AG04449 (cell line): ENCODE measurements at regions of chr4 and their contacts with region 1.

Region 1: GRCh38 chr4:141307241-141307689 is 86.6 kb downstream of the ZNF330 start:
- DNase-seq: peak; percentile 29
- H3K4me3 ChIP-seq: no peak overlapping the region
- CTCF ChIP-seq: peak; percentile 81

Region 2: GRCh38 chr4:140408974-140409373 is 898.3 kb before region 1 on chr4:
- CTCF ChIA-PET with region 1: no interaction called
- POLR2A ChIA-PET with region 1: no interaction called
- DNase-seq: no peak
- H3K4me3 ChIP-seq: no peak overlapping the region
- CTCF ChIP-seq: no peak

Region 3: DNA sequence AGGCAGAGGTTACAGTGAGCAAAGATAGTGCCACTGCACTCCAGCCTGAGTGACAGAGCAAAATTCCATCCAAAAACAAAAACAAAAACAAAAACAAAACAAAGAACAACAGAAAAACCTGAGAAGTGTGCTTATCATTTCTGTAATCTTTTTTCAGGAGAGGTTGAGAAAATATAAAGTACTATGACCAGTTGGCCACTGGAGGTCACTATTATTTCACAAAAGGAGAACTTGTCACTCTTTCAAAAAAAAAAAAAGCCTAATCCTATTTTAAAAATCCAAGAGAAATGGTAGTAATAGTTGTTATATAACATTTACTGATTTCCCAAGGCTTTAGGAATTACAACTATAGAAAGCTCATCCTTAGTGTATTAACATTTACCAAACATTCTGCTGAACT is 149.0 kb before region 1 on chr4:
- CTCF ChIA-PET with region 1: interaction called, 19 read pairs
- POLR2A ChIA-PET with region 1: no interaction called
- DNase-seq: no peak
- H3K4me3 ChIP-seq: no peak overlapping the region
- CTCF ChIP-seq: peak; percentile 9

Region 4: GRCh38 chr4:141294306-141294705 is 13.0 kb before region 1 on chr4:
- CTCF ChIA-PET with region 1: interaction called, 25 read pairs
- POLR2A ChIA-PET with region 1: no interaction called
- DNase-seq: no peak
- H3K4me3 ChIP-seq: no peak overlapping the region
- CTCF ChIP-seq: no peak

Region 5: GRCh38 chr4:141329174-141329569 is 21.9 kb after region 1 on chr4:
- CTCF ChIA-PET with region 1: interaction called, 11 read pairs
- POLR2A ChIA-PET with region 1: no interaction called
- DNase-seq: peak; percentile 65
- H3K4me3 ChIP-seq: no peak overlapping the region
- CTCF ChIP-seq: no peak

Region 6: DNA sequence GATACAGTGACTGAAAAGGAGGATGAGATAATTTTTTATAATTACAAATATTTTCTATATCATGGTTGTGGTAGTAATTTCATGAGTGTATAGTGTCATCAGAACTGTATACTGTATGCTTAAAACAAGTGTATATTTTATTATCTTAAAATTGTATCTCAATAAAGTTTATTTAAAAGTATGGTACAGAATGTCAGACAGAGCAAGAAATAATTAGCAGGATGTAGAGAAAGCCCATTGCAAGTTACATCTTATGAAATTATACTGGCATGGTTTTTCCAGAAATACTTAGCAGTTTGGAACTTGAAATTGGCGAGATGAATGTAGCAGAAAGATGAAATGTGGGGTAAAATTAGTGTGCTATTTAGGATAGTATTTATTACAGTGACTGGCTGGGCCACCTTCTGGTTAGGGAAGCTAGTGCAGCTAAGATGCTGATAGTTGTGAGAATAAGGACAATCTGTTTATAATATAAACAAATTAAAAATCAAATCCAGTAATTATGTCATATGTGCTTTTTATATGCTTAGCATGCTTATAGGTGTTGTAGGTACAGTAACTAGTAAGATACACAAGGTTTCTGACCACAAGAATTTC is 403.8 kb after region 1 on chr4:
- CTCF ChIA-PET with region 1: interaction called, 12 read pairs
- POLR2A ChIA-PET with region 1: no interaction called
- DNase-seq: no peak
- H3K4me3 ChIP-seq: no peak overlapping the region
- CTCF ChIP-seq: peak; percentile 59